Activated CD4-positive, alpha-beta T cell treated with anti-CD3 and anti-CD28 coated beads, Interleukin-2, amount 10 ng/mL, durations not matched to agents 24 days and 14 days (primary cell): ENCODE measurements at regions of chr7 and their contacts with region 1.

Region 1: DNA sequence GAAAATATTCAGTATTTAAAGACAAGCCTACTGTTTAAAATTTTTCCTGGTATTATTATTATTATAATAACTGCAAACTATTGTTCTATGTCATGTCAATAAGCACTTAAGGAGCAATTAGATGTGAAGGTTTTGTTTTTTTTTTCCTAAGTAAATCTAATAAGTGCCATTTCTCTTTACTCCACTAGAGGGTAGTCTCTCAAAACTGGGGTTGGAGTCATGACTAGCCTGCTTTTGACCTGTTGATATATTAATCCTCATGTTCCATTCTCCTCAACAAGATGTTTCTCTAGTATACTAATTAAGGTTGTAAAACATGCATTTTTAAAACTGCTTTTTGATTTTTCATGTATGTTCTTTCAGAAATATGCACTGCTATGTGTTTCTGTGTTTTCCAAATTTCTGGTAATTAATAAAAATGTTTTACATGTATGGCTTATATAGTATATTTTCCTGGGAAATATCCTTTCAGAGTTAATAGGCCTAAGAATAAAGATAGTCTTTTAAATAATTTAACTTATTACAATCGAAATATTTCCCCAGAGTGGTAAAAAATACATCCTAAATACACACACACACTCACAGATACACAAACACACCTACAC is 1.0 kb upstream of the LRRN3 start:
- DNase-seq: no peak
- H3K4me3 Mint-ChIP-seq: peak overlapping the region; percentile 93
- H3K27ac Mint-ChIP-seq: peak overlapping the region; percentile 23
- H3K4me1 Mint-ChIP-seq: peaks cover 52% of the 10 kb centered on the region
- H3K27me3 Mint-ChIP-seq: peaks cover 2% of the 10 kb centered on the region

Region 2: GRCh38 chr7:110003827-110004226 is 1086.1 kb before region 1 on chr7:
- intact Hi-C with region 1: no loop called
- DNase-seq: no peak
- H3K4me3 Mint-ChIP-seq: no peak overlapping the region
- H3K27ac Mint-ChIP-seq: no peak overlapping the region
- H3K4me1 Mint-ChIP-seq: no peaks in the 10 kb centered on the region
- H3K27me3 Mint-ChIP-seq: no peaks in the 10 kb centered on the region

Region 3: GRCh38 chr7:110801502-110801901 is 288.4 kb before region 1 on chr7:
- intact Hi-C with region 1: loop called (anchors 5 kb)
- DNase-seq: no peak
- H3K4me3 Mint-ChIP-seq: no peak overlapping the region
- H3K27ac Mint-ChIP-seq: peak overlapping the region; percentile 6
- H3K4me1 Mint-ChIP-seq: peaks cover 6% of the 10 kb centered on the region
- H3K27me3 Mint-ChIP-seq: no peaks in the 10 kb centered on the region

Region 4: GRCh38 chr7:110977127-110977737 is 112.7 kb before region 1 on chr7:
- intact Hi-C with region 1: loop called (anchors 1 kb)
- DNase-seq: peak; percentile 62
- H3K4me3 Mint-ChIP-seq: peak overlapping the region; percentile 40
- H3K27ac Mint-ChIP-seq: peak overlapping the region; percentile 38
- H3K4me1 Mint-ChIP-seq: peaks cover 25% of the 10 kb centered on the region
- H3K27me3 Mint-ChIP-seq: no peaks in the 10 kb centered on the region

Region 5: DNA sequence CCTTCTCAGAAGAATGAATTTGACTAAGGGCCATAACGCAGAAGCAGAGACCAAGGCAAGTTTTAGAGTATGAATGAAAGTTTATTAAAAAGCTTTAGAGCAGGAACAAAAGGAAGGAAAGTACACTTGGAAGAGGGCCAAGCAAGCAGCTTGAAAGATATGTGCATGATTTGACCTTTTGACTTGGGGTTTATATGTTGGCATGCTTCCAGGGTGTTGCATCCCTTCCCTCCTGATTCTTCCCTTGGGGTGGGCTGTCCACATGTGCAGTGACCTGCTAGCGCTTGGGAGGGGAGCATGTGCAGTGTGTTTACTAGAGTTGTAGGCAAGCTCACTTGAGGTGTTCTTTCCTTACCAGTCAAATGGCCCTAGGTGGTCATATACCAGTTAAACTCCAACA is 36.9 kb before region 1 on chr7:
- intact Hi-C with region 1: no loop called
- DNase-seq: no peak
- H3K4me3 Mint-ChIP-seq: no peak overlapping the region
- H3K27ac Mint-ChIP-seq: no peak overlapping the region
- H3K4me1 Mint-ChIP-seq: peaks cover 19% of the 10 kb centered on the region
- H3K27me3 Mint-ChIP-seq: no peaks in the 10 kb centered on the region

Region 6: DNA sequence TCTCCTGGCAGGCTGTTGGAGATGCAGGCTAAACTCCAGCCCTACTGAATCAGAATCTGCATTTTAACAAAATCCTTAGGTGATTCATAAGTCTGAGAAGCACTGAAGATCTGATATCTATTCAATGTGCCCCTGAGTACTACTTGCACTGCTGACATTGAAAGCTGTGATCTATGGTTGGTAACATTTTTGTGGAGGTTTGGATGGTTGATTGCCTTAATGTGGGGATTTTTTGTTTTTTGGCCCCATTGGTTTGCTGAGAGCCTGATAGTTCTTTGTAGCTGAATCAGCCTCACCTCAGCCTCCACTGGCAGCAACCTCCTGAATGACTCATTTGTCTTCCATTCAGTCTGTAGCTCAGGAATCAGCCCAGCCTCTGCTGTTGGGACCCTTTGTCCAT is 13.7 kb before region 1 on chr7:
- intact Hi-C with region 1: loop called (anchors 2 kb)
- DNase-seq: peak; percentile 75
- H3K4me3 Mint-ChIP-seq: peak overlapping the region; percentile 48
- H3K27ac Mint-ChIP-seq: peak overlapping the region; percentile 89
- H3K4me1 Mint-ChIP-seq: peaks cover 54% of the 10 kb centered on the region
- H3K27me3 Mint-ChIP-seq: no peaks in the 10 kb centered on the region

Region 7: GRCh38 chr7:111138196-111138569 is 48.3 kb after region 1 on chr7:
- intact Hi-C with region 1: loop called (anchors 1 kb)
- DNase-seq: peak; percentile 86
- H3K4me3 Mint-ChIP-seq: peak overlapping the region; percentile 76
- H3K27ac Mint-ChIP-seq: peak overlapping the region; percentile 96
- H3K4me1 Mint-ChIP-seq: peaks cover 23% of the 10 kb centered on the region
- H3K27me3 Mint-ChIP-seq: no peaks in the 10 kb centered on the region

Region 8: GRCh38 chr7:111183321-111183720 is 93.4 kb after region 1 on chr7:
- intact Hi-C with region 1: no loop called
- DNase-seq: no peak
- H3K4me3 Mint-ChIP-seq: no peak overlapping the region
- H3K27ac Mint-ChIP-seq: no peak overlapping the region
- H3K4me1 Mint-ChIP-seq: no peaks in the 10 kb centered on the region
- H3K27me3 Mint-ChIP-seq: no peaks in the 10 kb centered on the region

Region 9: GRCh38 chr7:111459756-111460280 is 369.9 kb after region 1 on chr7:
- intact Hi-C with region 1: no loop called
- DNase-seq: no peak
- H3K4me3 Mint-ChIP-seq: no peak overlapping the region
- H3K27ac Mint-ChIP-seq: no peak overlapping the region
- H3K4me1 Mint-ChIP-seq: no peaks in the 10 kb centered on the region
- H3K27me3 Mint-ChIP-seq: no peaks in the 10 kb centered on the region

Region 10: GRCh38 chr7:111486472-111487142 is 396.7 kb after region 1 on chr7:
- intact Hi-C with region 1: loop called (anchors 1 kb)
- DNase-seq: peak; percentile 66
- H3K4me3 Mint-ChIP-seq: no peak overlapping the region
- H3K27ac Mint-ChIP-seq: no peak overlapping the region
- H3K4me1 Mint-ChIP-seq: peaks cover 2% of the 10 kb centered on the region
- H3K27me3 Mint-ChIP-seq: no peaks in the 10 kb centered on the region

Region 11: DNA sequence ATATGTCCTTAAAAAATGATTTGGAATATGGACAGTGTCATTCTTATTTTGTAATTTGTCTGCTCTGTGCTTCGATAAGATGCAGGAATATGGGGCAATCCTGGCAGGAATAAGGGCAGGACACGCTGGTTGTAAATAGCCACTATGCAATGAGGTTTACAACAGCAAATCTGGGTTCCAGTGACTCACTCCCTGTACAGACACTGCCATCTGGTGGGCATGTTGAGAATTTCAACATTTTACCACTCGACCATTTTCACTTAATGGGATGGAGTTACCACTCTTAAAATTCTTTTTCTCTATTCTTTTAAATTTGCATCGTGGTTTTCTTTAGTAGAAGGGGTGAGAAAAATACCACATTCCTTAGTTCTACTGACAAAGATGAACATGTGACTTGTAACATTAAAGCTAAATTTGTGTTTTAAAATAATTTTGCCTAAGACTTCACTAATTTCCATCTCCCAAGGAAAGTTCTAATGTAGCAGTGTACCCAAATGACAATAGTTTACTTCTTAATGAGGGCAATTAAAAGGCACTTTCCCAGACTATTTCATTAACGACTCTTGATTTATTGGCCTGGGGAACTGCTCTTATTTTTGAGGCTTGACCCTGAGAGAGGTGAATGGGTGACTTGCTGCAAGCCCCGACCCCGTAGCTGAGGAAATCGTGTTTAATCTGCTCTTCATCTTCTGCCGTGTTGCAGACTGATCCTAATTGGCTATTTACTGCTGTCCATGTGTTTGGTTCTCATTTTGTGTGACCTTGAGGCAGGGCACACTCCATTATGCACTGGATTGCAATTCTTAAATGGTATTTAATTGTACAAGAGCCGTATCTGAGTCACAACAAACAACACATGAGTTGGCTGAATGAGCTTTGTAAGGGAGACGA is 646.0 kb after region 1 on chr7:
- intact Hi-C with region 1: loop called (anchors 5 kb)
- DNase-seq: peak; percentile 89
- H3K4me3 Mint-ChIP-seq: no peak overlapping the region
- H3K27ac Mint-ChIP-seq: no peak overlapping the region
- H3K4me1 Mint-ChIP-seq: no peaks in the 10 kb centered on the region
- H3K27me3 Mint-ChIP-seq: no peaks in the 10 kb centered on the region